ENCODE measurements at regions of chr5 and their contacts with region 1.

Region 1: DNA sequence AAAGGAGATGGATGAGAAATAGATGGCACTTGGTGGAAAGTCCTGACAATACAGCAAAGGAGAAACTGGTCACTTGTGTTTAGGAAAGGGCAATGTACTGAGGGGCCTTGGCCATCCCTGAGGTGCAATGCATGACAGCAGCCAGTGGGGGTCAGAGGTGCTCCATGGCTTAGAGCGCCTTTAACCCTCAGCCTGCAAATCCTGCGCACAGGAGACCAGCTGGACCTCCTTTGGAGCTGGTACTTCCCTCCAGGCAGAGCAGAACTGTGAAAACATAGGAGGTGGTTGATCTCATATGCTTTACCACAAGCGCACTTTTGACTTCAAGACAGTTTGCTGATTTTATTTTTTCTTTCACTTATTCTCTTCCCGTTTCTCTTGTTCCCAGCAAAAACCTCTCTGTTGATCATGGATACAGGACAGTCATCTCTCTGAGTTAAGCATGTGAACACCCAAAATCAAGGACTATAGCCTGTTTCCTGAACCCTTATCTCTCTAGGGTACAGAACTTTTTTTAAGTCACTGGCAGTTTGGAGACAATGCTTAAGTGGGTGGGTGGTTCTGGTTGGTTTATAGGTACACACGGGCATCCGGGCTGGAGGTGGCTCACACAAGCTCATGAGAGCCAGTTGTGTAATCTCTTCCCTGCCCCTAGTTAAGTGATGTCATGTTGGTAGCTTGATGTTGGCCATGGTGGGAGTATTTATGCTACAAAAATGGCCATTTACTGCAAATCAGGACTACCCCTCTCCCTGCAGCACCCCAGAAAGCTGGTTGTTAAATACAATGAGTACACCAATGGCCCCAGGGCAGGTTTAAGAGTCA is 37.6 kb upstream of the ANKRD55 start:
- DNase-seq: peak; percentile 83 to 84
- H3K4me3 ChIP-seq: no peak overlapping the region
- H3K27ac ChIP-seq: peak overlapping the region; percentile 44
- H3K4me1 ChIP-seq: peaks cover 11% of the 10 kb centered on the region
- H3K27me3 ChIP-seq: no peaks in the 10 kb centered on the region
- CTCF ChIP-seq: peak; percentile 98

Region 2: DNA sequence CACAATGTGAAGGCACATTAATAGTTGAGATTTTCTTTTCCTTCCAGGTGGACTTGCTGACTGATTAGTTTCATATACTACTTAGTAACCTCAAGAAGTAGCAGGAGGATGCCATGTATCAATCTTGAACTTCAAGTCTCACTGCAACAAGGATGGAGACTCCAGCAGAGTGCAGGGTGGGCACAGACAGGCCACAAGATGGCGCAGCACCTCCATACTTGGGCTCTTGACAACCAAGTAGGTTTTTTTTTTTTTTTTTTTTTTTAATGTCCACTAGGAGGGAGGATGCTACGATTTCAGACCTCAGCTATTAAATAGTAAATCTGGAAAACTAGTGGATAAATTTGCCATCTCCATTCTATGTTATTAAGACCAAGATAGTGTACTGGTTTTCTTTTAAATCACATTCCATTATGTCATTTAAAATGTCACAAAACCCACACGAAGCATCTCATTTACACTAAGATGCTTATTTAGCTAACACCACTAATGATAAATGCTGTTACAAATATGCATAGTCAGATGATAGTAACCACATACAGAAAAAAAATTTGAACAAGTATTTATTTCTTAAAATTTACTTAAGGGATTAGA is 334.6 kb before region 1 on chr5:
- CTCF ChIA-PET with region 1: interaction called, 8 read pairs
- POLR2A ChIA-PET with region 1: no interaction called
- intact Hi-C with region 1: loop called (anchors 1 kb)
- DNase-seq: peak; percentile 71 to 73
- H3K4me3 ChIP-seq: no peak overlapping the region
- H3K27ac ChIP-seq: no peak overlapping the region
- H3K4me1 ChIP-seq: peaks cover 23% of the 10 kb centered on the region
- H3K27me3 ChIP-seq: no peaks in the 10 kb centered on the region
- CTCF ChIP-seq: peak; percentile 86

Region 3: DNA sequence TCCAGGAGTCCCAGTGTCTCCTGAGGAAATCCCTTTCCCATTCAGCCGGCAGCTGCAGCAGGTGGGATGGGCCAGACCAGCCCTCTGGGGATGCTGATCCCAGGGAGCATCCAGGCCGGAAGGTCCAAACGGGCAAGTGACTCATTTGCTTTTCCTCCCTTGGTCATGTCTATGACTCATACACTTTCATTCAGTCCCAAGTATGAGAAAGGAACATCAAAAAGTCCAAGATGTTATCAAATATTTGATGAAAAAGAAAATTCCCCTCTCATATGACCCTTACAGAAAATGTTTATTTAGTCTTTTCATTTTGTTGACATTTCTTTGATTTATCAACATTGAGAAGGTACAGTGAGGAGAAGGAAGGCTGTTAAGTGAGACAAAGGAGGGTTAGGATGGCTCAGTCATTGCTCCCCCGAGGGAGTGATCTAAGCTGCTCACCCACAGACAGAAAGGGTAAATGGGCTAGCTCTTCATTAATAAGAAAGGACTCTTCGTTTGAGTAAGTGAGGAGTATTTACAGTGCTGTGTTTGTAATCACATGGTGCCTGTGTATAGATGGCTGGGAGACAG is 79.9 kb after region 1 on chr5:
- CTCF ChIA-PET with region 1: interaction called, 3 read pairs
- POLR2A ChIA-PET with region 1: no interaction called
- intact Hi-C with region 1: loop called (anchors 2 kb)
- DNase-seq: peak; percentile 81 to 94
- H3K4me3 ChIP-seq: no peak overlapping the region; the same call in 1 of the 2 replicates
- H3K27ac ChIP-seq: peak overlapping the region; percentile 76
- H3K4me1 ChIP-seq: peaks cover 73% of the 10 kb centered on the region
- H3K27me3 ChIP-seq: no peaks in the 10 kb centered on the region
- CTCF ChIP-seq: no peak

Region 4: DNA sequence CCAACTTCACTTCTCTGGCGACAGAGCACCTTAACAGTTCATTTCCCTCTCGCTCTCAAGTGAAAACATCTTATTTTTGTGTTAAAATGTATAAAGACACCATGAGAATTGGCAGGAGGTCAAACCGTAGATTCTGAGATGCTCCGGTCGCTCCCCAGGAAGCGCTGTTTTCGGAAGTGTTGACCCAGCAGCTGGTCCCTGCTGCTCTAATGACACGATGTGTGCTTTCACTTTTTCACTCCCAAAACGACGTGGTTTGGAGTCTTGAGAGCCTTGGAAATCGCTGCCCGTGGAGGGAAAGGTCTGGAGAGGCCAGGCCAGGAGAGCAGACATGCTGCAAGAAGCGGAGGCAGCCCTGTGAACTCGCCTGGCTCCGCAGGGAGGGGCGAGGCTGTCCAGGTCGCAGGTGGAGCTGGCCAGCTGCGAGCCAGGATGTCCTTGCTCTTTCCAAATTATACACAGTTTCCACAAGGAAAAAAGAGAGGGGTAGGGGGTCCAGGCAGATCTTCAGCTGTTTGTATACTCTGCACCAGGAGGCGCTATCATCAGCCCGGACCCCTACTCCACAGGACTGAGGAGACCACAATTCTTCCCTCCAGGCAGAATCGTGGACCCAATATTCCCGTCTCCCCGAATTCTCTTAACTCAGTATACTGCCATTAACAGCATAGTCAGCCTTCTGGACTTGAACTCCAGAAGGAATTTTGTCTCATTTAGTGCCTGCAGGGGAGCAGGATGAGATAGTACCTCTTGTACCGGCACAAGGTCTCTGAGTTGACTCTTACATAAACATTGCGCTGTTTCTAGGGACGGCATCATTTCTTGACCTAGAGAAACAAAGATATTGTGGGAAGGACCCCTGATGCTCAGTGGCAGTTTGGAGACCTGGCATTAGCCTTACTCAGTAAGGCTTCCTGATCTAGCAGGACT is 210.9 kb after region 1 on chr5:
- CTCF ChIA-PET with region 1: no interaction called
- POLR2A ChIA-PET with region 1: no interaction called
- intact Hi-C with region 1: loop called (anchors 1 kb)
- DNase-seq: peak; percentile 34 to 47
- H3K4me3 ChIP-seq: peak overlapping the region; percentile 78
- H3K27ac ChIP-seq: peak overlapping the region; percentile 85
- H3K4me1 ChIP-seq: peaks cover 38% of the 10 kb centered on the region
- H3K27me3 ChIP-seq: no peaks in the 10 kb centered on the region
- CTCF ChIP-seq: peak; percentile 29; the same call in 1 of the 2 replicates

Region 5: DNA sequence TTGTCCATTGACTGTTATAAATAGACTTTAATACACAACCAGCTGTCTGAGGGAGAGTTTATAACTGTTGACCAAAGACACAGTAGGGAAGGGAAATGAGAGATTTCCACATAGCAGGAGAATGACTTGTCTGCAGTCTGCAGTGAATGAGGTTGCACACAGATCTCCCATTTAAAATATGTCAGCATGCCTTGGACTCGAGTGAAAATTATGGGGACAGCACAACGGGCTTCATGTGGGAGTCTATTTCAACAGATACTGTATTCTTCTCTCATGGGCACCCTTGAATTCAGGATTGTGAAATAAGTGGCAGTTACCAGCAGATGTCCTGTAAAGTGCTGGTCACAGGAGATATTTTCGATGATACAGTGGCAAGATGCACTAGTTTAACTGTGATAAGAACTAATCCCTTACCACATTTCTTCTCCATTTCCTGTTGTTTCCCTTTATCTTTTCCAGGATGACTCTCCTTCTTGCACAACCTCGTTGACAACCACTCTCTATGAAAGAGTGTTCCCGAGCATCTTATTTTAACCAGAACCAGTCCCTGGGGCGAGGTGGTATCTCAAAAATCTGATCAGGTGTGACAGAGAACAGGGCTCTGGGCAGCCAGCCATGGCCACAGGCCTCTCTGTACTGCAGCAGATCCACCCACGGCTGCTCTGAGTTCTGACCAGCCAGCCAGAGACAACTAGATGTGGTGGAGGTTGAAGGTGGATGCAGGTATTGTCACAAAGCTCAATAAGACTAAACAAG is 493.1 kb after region 1 on chr5:
- CTCF ChIA-PET with region 1: no interaction called
- POLR2A ChIA-PET with region 1: interaction called, 3 read pairs
- intact Hi-C with region 1: loop called (anchors 2 kb)
- DNase-seq: peak; percentile 83 to 86
- H3K4me3 ChIP-seq: peak overlapping the region; percentile 8; the same call in 1 of the 2 replicates
- H3K27ac ChIP-seq: peak overlapping the region; percentile 67
- H3K4me1 ChIP-seq: peaks cover 46% of the 10 kb centered on the region
- H3K27me3 ChIP-seq: no peaks in the 10 kb centered on the region
- CTCF ChIP-seq: no peak

Region 6: GRCh38 chr5:56909294-56910209 is 638.8 kb after region 1 on chr5 and contains the start of gene SETD9:
- CTCF ChIA-PET with region 1: no interaction called
- POLR2A ChIA-PET with region 1: interaction called, 3 read pairs
- intact Hi-C with region 1: loop called (anchors 5 kb)
- DNase-seq: peak; percentile 87 to 97
- H3K4me3 ChIP-seq: peak within 1 kb of the TSS; percentile 98
- H3K27ac ChIP-seq: peak within 1 kb of the TSS; percentile 92
- H3K4me1 ChIP-seq: peaks cover 12% of the 10 kb centered on the region
- H3K27me3 ChIP-seq: no peaks in the 10 kb centered on the region
- CTCF ChIP-seq: no peak
- total RNA-seq, gene SETD9: 6.5 and 7.3 TPM in 2 replicates

Measured in PC-9 (cell line).